Activated naive CD4-positive, alpha-beta T cell treated with anti-CD3 and anti-CD28 coated beads, Interleukin-2, amount 10 ng/mL, durations not matched to agents 7 days and 5 days (primary cell): ENCODE measurements at regions of chr16 and their contacts with region 1.

Region 1: GRCh38 chr16:50065624-50066481 is at the start of gene HEATR3:
- DNase-seq: peak; percentile 95
- H3K4me3 Mint-ChIP-seq: peak within 1 kb of the TSS; percentile 91
- H3K27ac Mint-ChIP-seq: peak within 1 kb of the TSS; percentile 96
- H3K4me1 Mint-ChIP-seq: peaks cover 46% of the 10 kb centered on the region
- H3K27me3 Mint-ChIP-seq: no peaks in the 10 kb centered on the region

Region 2: DNA sequence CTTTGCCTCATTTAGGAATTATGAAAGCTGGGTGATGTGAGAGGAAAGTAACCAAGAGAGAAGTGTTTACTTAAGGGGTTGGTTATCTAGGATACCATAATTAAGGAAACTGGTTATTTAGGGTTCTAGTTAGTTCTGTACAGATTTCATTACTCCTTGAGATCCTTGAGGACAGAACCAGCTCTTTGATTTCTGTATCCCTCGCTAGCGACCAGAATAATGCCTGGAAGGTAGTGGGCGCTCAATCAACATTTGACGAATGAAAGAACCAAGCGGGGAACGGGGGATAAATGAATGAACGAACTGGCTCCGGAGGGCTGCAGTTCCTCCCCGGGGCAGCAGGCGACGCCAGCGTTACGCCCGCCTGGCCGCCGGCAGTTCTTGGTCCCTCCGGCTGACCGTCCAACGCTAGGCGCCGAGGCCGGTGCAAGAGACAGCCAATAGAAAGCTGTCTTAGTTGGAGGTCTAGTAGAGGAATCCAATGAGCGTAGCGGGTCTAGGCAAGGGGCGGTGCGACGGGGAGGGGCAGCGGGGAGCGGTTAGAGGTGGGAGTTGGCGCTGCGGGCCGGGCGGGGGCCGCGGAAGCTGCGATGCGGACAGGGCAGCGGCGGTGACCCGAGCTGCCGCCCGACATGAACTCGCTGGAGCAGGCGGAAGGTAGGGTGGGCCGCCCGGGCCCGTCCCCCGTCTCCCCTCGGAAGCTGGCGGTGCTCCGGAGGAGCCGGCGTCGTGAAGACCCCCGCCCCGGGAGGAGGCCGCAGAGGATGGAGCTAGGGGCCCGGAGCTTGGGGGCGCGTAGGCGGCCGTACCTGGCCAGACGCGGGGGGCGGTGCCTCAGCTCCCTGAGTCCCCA is 40.9 kb before region 1 on chr16 and contains the start of gene CNEP1R1:
- CTCF ChIA-PET with region 1: interaction called, 24 read pairs
- DNase-seq: peak; percentile 94
- H3K4me3 Mint-ChIP-seq: peak within 1 kb of the TSS; percentile 88
- H3K27ac Mint-ChIP-seq: peak within 1 kb of the TSS; percentile 92
- H3K4me1 Mint-ChIP-seq: peaks cover 24% of the 10 kb centered on the region
- H3K27me3 Mint-ChIP-seq: no peaks in the 10 kb centered on the region

Region 3: DNA sequence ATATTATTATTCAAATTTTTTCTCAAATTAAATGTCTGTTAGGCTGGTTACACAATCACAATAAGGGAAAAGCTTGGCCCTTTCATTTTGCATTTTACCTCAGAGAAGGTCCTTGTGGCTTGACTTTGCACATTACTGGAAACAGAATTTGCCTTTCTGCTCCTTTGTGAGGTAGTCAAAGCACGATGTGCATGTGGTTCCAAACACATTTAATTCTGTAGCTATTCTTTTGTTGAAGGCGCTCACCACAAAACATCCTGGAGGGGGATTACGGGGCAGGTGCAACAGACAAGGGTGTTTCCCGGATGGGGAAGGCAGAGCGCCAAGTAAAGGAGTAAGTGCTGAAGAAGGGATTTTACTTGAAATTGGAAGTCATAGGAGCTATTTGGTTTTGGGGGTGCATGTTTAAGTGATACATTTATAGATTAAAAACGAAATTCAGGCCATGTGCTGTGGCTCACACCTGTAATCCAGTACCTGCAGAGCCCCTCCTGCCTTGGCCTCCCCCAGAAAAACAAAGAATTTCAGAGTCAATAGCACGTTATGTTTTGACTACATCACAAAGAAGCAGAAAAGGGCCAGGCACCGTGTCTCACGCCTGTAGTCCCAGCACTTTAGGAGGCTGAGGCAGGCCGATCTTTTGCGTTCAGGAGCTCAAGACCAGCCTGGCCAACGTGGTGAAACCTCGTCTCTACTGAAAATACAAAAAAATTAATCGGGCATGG is 56.0 kb after region 1 on chr16:
- CTCF ChIA-PET with region 1: interaction called, 16 read pairs
- DNase-seq: peak; percentile 65
- H3K4me3 Mint-ChIP-seq: no peak overlapping the region
- H3K27ac Mint-ChIP-seq: peak overlapping the region; percentile 79
- H3K4me1 Mint-ChIP-seq: peaks cover 41% of the 10 kb centered on the region
- H3K27me3 Mint-ChIP-seq: no peaks in the 10 kb centered on the region

Region 4: DNA sequence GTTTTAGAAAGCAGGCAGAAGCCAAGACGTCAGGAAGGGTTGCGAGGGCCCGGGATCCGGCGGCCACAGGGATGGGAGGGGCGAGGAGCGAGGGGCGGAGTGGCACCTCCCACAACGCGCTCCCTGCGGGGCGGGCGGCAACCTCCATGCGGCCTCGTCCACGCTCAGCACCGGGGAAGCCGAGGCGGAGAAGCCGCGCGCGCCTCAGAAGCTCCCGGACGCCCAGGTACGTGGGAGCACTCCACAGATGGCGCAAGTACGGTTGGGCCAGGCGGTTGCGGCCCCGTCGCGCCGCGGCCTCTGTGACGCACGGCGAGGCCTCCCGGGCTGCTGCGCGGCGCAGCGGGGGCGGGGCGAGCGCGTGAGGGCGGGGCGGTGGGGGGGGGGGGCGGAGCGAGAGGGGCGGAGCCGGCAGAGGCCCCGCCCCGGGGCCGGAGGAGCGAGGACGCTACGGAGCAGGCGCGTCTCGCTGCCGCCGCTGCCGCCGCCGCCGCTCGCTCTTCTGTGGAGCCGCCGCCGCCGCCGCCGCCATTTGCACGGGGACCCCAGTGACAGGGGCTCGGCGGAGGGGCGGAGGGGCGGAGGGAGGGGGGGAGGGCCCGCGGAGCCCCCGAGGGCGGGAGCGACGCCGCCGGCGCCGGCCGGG is 87.1 kb after region 1 on chr16 and contains the start of gene TENT4B:
- CTCF ChIA-PET with region 1: interaction called, 11 read pairs
- DNase-seq: peak; percentile 92
- H3K4me3 Mint-ChIP-seq: peak within 1 kb of the TSS; percentile 84
- H3K27ac Mint-ChIP-seq: peak within 1 kb of the TSS; percentile 96
- H3K4me1 Mint-ChIP-seq: peaks cover 43% of the 10 kb centered on the region
- H3K27me3 Mint-ChIP-seq: no peaks in the 10 kb centered on the region

Region 5: GRCh38 chr16:50202926-50203624 is 137.2 kb after region 1 on chr16:
- CTCF ChIA-PET with region 1: interaction called, 180 read pairs
- DNase-seq: no peak
- H3K4me3 Mint-ChIP-seq: no peak overlapping the region
- H3K27ac Mint-ChIP-seq: peak overlapping the region; percentile 9
- H3K4me1 Mint-ChIP-seq: peaks cover 44% of the 10 kb centered on the region
- H3K27me3 Mint-ChIP-seq: no peaks in the 10 kb centered on the region